ENCODE measurements at regions of chr10 and their contacts with region 1.

Region 1: GRCh38 chr10:59808896-59809643 is 55.8 kb upstream of the MRLN start:
- DNase-seq: peak; percentile 54
- H3K4me3 ChIP-seq: no peak overlapping the region; a peak in 1 of 4 replicates
- H3K27ac ChIP-seq: no peak overlapping the region
- H3K4me1 ChIP-seq: no peaks in the 10 kb centered on the region
- H3K27me3 ChIP-seq: no peaks in the 10 kb centered on the region
- CTCF ChIP-seq: peak; percentile 77
- EP300 ChIP-seq: no peak
- RAD21 ChIP-seq: peak; percentile 88

Region 2: GRCh38 chr10:59633063-59633462 is 176.0 kb before region 1 on chr10:
- CTCF ChIA-PET with region 1: interaction called, 56 read pairs
- POLR2A ChIA-PET with region 1: no interaction called
- DNase-seq: no peak
- H3K4me3 ChIP-seq: no peak overlapping the region
- H3K27ac ChIP-seq: no peak overlapping the region
- H3K4me1 ChIP-seq: no peaks in the 10 kb centered on the region
- H3K27me3 ChIP-seq: no peaks in the 10 kb centered on the region
- CTCF ChIP-seq: no peak
- EP300 ChIP-seq: no peak
- RAD21 ChIP-seq: no peak

Region 3: DNA sequence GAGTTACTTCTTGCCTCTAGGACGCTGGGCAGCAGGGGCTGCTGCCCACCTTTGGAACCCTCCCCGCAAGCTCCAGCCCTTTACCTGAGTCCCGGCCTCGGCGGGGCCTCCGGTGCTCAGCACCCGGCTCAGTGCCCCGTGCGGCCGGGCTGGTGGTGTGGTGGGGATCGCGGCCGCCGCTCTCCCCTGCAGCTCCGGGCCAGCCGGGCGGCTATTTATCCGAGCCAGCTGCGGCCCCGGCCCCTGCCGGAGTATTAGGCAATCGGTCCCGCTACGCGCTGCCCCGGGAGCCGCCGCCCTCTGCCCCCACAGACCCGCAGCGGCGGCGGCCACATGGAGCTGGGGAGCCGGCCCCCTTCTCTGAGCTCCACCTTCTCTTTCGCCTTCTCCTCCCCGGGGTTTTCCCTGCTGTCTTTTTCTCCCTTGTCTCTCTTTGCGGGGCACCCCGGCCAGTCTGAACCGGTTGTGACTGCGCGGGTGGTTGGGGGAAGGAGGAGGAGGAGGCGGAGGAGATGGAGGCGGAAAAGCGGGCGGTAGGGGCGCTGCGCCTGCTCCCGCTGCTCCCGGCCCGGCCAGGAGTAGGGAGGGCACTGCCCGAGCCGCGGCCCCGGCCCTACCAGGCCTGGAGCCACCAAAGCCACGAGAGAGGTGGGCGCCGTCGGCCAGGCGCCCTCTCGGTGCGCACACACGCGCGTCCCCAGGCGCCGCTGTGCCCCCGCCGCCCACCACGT is 99.5 kb before region 1 on chr10 and contains the start of gene SLC16A9:
- CTCF ChIA-PET with region 1: interaction called, 10 read pairs
- POLR2A ChIA-PET with region 1: no interaction called
- DNase-seq: peak; percentile 93
- H3K4me3 ChIP-seq: peak within 1 kb of the TSS; percentile 67 to 82
- H3K27ac ChIP-seq: peak within 1 kb of the TSS; percentile 36 to 70; a peak in 3 of 4 replicates
- H3K4me1 ChIP-seq: peaks cover 0 to 23% of the 10 kb centered on the region in 2 experiments; a peak in 2 of 4 replicates
- H3K27me3 ChIP-seq: peaks cover 6% of the 10 kb centered on the region; the same call in 1 of the 2 replicates
- CTCF ChIP-seq: peak; percentile 51
- EP300 ChIP-seq: no peak
- RAD21 ChIP-seq: no peak
- polyA plus RNA-seq, gene SLC16A9: 4.7 and 6.7 TPM in 2 replicates

Region 4: GRCh38 chr10:59823111-59823510 is 14.0 kb after region 1 on chr10:
- CTCF ChIA-PET with region 1: interaction called, 15 read pairs
- POLR2A ChIA-PET with region 1: no interaction called
- DNase-seq: no peak
- H3K4me3 ChIP-seq: no peak overlapping the region
- H3K27ac ChIP-seq: no peak overlapping the region
- H3K4me1 ChIP-seq: no peaks in the 10 kb centered on the region; a peak in 1 of 4 replicates
- H3K27me3 ChIP-seq: no peaks in the 10 kb centered on the region
- CTCF ChIP-seq: no peak
- EP300 ChIP-seq: no peak
- RAD21 ChIP-seq: no peak

Measured in SK-N-SH (cell line).